ENCODE measurements at regions of chr3 and their contacts with region 1.

Region 1: GRCh38 chr3:197002701-197003454 is 26.7 kb downstream of the MELTF start:
- DNase-seq: peak; percentile 73 to 90 (median 79)
- ATAC-seq: peak; percentile 28 to 92 (median 82)
- H3K4me3 ChIP-seq: peak overlapping the region; percentile 26 to 78 (median 67)
- H3K27ac ChIP-seq: peak overlapping the region in 11 of 12 donors; percentile 34 to 86 (median 71)
- H3K4me1 ChIP-seq: peaks cover 0 to 16% (median 8%) of the 10 kb centered on the region in 12 donors
- H3K27me3 ChIP-seq: no peaks in the 10 kb centered on the region
- CTCF ChIP-seq: peak; percentile 48 to 93 (median 79)
- POLR2A ChIP-seq: no peak

Region 2: GRCh38 chr3:196813903-196814302 is 189.0 kb before region 1 on chr3:
- intact Hi-C with region 1: no loop called
- DNase-seq: no peak
- ATAC-seq: peak; percentile 54 to 94 (median 88)
- H3K4me3 ChIP-seq: no peak overlapping the region
- H3K27ac ChIP-seq: peak overlapping the region in 6 of 12 donors; percentile 27 to 58 (median 34)
- H3K4me1 ChIP-seq: peaks cover 0 to 8% (median 0%) of the 10 kb centered on the region in 12 donors
- H3K27me3 ChIP-seq: no peaks in the 10 kb centered on the region
- CTCF ChIP-seq: no peak
- POLR2A ChIP-seq: no peak

Region 3: DNA sequence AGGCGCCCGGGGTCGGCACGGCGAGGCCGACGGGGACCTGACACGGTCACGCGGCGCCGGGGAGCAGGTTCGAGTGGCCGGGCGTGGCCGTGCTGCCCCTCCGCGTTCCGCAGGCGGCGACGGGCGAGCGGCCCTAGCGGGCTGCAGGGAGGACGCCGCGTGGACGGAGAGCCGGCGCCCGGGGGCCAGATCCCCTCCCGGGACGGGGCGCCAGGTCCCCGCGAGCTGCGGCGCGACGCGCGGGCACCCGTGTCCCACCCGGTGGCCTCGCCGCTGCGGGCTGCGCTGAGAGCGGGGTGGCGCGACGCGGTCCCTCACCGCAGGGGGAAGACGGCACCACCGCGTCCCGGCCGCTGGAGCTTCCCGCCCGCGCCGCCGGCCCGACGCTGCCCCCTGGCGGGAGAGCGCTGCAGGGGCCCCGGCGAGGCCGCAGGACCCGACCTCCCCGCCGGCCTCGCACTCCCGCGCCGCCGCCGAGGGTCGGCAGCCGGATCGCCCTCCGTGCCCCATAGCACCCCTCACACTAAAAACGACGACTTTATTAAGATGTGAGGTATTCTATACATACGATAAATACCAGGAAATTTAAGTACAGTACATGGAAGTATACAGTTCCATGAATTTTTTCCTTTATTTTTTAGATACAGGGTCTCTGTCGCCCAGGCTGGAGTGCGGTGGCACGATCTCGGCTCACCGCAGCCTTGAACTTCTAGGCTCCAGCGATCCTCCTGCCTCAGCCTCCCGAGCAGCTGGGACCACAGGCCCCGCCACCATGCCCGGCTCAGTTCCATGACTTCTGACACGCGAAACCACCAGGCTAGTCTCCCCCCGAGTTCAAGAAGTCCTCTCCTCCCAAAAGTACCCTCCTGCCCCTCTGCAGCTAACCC is 33.0 kb before region 1 on chr3:
- intact Hi-C with region 1: no loop called
- DNase-seq: peak; percentile 58 to 86 (median 63)
- ATAC-seq: peak in 3 of 4 donors; percentile 58 to 84 (median 78)
- H3K4me3 ChIP-seq: peak overlapping the region; percentile 66 to 97 (median 84)
- H3K27ac ChIP-seq: peak overlapping the region in 11 of 12 donors; percentile 65 to 85 (median 79)
- H3K4me1 ChIP-seq: peaks cover 0 to 27% (median 10%) of the 10 kb centered on the region in 12 donors
- H3K27me3 ChIP-seq: no peaks in the 10 kb centered on the region
- CTCF ChIP-seq: peak; percentile 37 to 98 (median 86)
- POLR2A ChIP-seq: peak in 1 of 2 donors; percentile 11

Region 4: DNA sequence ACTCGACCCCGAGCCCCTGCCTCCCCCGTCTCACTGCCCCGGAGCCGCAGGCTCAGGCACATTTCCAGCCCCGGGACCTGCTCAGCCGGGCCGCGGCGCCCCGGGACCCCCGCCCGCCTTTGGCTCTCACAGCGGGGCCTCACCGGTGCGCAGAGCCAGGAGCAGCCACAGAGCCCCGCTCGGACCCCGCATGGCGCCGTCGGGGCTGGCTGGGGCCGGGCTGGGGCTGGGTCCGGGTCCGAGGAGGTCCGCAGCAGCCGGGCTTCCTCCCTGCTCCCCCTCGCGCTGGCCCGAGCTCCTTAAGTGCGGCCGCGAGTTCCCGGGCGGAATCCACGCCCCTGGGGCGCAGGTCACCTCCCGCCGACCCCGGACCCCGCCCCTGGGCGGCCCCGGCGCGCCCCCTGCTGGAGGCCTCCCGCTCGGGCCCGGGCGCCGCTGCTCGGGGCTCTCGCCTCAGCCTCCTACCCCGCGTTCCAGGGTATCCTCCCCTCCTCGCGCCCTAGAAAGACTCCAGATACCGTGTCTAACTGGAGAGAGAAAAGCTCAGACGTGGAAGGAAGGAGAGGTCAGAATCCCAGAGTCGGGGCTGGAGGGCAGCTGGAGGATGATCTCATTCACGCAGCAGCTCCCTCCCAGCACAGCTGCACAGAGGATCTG is 26.8 kb after region 1 on chr3 and contains the start of gene MELTF:
- intact Hi-C with region 1: loop called in 1 of 10 experiments (anchors 2 kb)
- DNase-seq: peak; percentile 47 to 83 (median 64)
- ATAC-seq: peak in 3 of 4 donors; percentile 30 to 64 (median 64)
- H3K4me3 ChIP-seq: peak within 1 kb of the TSS; percentile 19 to 68 (median 54)
- H3K27ac ChIP-seq: peak within 1 kb of the TSS in 10 of 12 donors; percentile 60 to 89 (median 80)
- H3K4me1 ChIP-seq: peaks cover 0 to 38% (median 24%) of the 10 kb centered on the region in 12 donors
- H3K27me3 ChIP-seq: peaks cover 0 to 15% (median 0%) of the 10 kb centered on the region in 9 donors
- CTCF ChIP-seq: peak; percentile 64 to 89 (median 80)
- POLR2A ChIP-seq: no peak
- total RNA-seq, gene MELTF: 4.9 to 43.8 (median 10.3) TPM

Region 5: GRCh38 chr3:197186887-197187588 is 184.2 kb after region 1 on chr3:
- intact Hi-C with region 1: loop called (anchors 1 to 10 kb)
- DNase-seq: peak in 1 of 5 donors; percentile 13
- ATAC-seq: peak; percentile 58 to 75 (median 64)
- H3K4me3 ChIP-seq: no peak overlapping the region
- H3K27ac ChIP-seq: no peak overlapping the region
- H3K4me1 ChIP-seq: peaks cover 0 to 13% (median 3%) of the 10 kb centered on the region in 12 donors
- H3K27me3 ChIP-seq: no peaks in the 10 kb centered on the region
- CTCF ChIP-seq: peak; percentile 71 to 91 (median 82)
- POLR2A ChIP-seq: no peak

Region 6: DNA sequence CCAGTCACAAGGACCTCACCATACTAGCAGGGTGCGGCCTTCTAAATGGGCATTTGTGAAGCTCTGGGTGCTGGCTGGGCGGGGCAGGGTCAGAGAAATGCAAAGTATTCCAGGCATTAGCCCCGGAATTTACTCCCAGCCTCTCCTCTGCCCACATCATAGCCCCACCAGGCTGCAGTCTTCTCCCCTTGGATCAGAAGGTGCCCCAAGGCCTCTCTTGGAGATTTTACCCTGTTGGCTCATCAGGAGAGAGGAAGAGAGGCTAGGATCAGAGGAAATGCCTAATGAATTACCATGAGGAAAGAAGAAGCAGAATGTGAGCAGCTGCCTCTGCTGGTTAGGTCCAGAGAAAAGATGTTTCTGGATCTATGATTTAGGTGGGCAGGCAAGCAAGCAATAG is 487.2 kb after region 1 on chr3:
- intact Hi-C with region 1: loop called in 1 of 10 experiments (anchors 10 kb)
- DNase-seq: no peak
- ATAC-seq: no peak
- H3K4me3 ChIP-seq: no peak overlapping the region
- H3K27ac ChIP-seq: no peak overlapping the region
- H3K4me1 ChIP-seq: peaks cover 0 to 18% (median 4%) of the 10 kb centered on the region in 12 donors
- H3K27me3 ChIP-seq: no peaks in the 10 kb centered on the region
- CTCF ChIP-seq: no peak
- POLR2A ChIP-seq: no peak

Region 7: GRCh38 chr3:197516517-197516889 is 513.6 kb after region 1 on chr3:
- intact Hi-C with region 1: loop called in 1 of 10 experiments (anchors 10 kb)
- DNase-seq: no peak
- ATAC-seq: no peak
- H3K4me3 ChIP-seq: no peak overlapping the region
- H3K27ac ChIP-seq: no peak overlapping the region
- H3K4me1 ChIP-seq: peaks cover 0 to 6% (median 0%) of the 10 kb centered on the region in 12 donors
- H3K27me3 ChIP-seq: no peaks in the 10 kb centered on the region
- CTCF ChIP-seq: no peak
- POLR2A ChIP-seq: no peak